A549 (cell line): ENCODE measurements at regions of chr7 and their contacts with region 1.

Region 1: GRCh38 chr7:128425850-128426249 is 16.1 kb upstream of the IMPDH1 start:
- DNase-seq: peak; percentile 67 to 89
- ATAC-seq: peak; percentile 62 to 71; a peak in 5 of 6 replicates
- H3K4me3 ChIP-seq: no peak overlapping the region
- H3K27ac ChIP-seq: no peak overlapping the region
- H3K4me1 ChIP-seq: peaks cover 20% of the 10 kb centered on the region
- CTCF ChIP-seq: peak; percentile 88
- EP300 ChIP-seq: no peak
- POLR2A ChIP-seq: no peak
- RAD21 ChIP-seq: peak; percentile 81 to 91

Region 2: DNA sequence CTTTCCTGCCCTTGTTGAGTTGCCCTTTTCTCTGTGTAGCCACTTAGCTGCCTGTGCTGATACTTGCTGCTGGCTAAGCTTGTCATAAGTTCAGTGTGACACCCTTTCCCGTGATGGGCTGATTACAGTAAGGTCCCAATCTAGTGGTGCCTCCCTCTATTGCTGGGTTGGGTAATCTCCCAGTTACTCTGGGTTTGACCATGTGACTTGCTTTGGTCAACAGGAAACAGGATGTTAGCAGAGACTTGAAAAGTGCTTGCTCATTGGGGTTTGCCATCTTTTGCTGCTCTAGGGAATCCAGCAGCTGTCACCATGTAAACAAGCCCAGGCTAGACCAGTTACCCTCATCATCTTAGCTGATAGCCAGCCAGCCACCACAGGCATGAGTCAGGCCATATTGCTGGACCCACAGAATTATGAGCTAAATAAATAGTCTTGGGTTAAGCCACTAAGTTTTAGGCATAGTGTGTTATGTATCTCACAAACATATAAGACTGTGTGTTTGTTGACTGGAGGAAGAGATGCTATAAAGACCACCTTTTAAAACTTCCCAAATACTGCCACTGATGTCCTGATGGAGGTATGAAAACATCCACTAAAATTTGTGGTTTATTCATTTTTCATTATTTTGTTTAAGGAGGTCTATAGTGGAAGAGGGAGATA is 188.8 kb before region 1 on chr7:
- CTCF ChIA-PET with region 1: no interaction called
- POLR2A ChIA-PET with region 1: no interaction called
- DNase-seq: peak; percentile 32 to 87
- ATAC-seq: peak; percentile 71 to 82
- H3K4me3 ChIP-seq: no peak overlapping the region
- H3K27ac ChIP-seq: peak overlapping the region in 1 of 2 experiments; percentile 39; a peak in 3 of 6 replicates
- H3K4me1 ChIP-seq: peaks cover 10% of the 10 kb centered on the region; the same call in 2 of the 3 replicates
- CTCF ChIP-seq: no peak
- EP300 ChIP-seq: no peak
- POLR2A ChIP-seq: no peak
- RAD21 ChIP-seq: no peak

Region 3: GRCh38 chr7:128322040-128322643 is 103.7 kb before region 1 on chr7:
- CTCF ChIA-PET with region 1: no interaction called
- POLR2A ChIA-PET with region 1: no interaction called
- DNase-seq: peak in 1 of 2 experiments; percentile 54
- ATAC-seq: peak; percentile 83 to 88; a peak in 5 of 6 replicates
- H3K4me3 ChIP-seq: no peak overlapping the region
- H3K27ac ChIP-seq: no peak overlapping the region
- H3K4me1 ChIP-seq: no peaks in the 10 kb centered on the region
- CTCF ChIP-seq: peak; percentile 44
- EP300 ChIP-seq: no peak
- POLR2A ChIP-seq: no peak
- RAD21 ChIP-seq: peak; percentile 33 to 47; a peak in 3 of 5 replicates

Region 4: DNA sequence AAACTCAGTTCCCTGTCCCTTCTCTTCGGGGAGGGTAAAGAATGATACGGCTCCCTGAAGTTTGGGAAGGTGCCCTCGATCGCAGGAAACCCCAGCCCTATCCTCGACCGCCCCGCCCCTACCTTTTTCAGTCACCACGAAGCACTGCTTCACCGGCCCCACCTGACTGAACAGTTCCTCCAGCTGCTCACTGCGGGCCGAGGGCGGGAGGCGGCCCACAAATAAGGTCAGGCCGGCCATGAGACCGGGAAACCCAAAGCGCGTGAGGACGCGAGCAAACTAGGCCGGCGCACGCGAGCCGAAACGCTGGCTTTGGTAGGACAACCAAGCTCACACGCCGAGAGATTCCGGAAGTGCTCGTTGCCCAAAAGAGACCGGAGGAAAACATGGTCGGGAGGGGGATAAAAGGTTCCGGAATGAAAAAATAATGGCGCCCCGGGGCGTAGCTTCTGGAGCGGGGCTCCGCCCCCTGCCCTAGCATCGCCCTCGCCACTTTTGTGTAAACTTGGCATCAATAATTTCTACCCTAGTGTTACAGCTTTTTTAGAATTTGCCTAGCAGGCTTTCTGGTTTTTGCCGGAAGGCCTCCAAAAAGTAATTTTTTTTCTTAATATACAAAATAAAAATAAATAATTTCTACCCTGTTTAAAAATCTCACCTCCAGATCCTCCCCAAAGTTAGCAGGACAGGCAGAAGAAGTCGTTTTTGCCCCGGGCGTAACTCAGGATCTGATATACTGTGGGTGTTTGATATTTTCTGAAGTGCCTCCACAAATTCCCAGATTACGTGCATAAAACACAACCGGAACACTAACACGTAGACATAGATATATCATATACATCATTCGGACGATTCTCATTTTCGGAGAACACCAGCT is 82.1 kb before region 1 on chr7 and contains the start of gene RBM28:
- CTCF ChIA-PET with region 1: interaction called, 162 read pairs
- POLR2A ChIA-PET with region 1: no interaction called
- DNase-seq: peak; percentile 92 to 98
- ATAC-seq: peak; percentile 87 to 95
- H3K4me3 ChIP-seq: peak within 1 kb of the TSS; percentile 94
- H3K27ac ChIP-seq: peak within 1 kb of the TSS; percentile 89 to 94
- H3K4me1 ChIP-seq: peaks cover 20% of the 10 kb centered on the region; the same call in 2 of the 3 replicates
- CTCF ChIP-seq: no peak
- EP300 ChIP-seq: no peak
- POLR2A ChIP-seq: peak; percentile 96
- RAD21 ChIP-seq: no peak
- polyA plus RNA-seq, gene RBM28: 51.9 and 77.3 TPM in 2 replicates

Region 5: DNA sequence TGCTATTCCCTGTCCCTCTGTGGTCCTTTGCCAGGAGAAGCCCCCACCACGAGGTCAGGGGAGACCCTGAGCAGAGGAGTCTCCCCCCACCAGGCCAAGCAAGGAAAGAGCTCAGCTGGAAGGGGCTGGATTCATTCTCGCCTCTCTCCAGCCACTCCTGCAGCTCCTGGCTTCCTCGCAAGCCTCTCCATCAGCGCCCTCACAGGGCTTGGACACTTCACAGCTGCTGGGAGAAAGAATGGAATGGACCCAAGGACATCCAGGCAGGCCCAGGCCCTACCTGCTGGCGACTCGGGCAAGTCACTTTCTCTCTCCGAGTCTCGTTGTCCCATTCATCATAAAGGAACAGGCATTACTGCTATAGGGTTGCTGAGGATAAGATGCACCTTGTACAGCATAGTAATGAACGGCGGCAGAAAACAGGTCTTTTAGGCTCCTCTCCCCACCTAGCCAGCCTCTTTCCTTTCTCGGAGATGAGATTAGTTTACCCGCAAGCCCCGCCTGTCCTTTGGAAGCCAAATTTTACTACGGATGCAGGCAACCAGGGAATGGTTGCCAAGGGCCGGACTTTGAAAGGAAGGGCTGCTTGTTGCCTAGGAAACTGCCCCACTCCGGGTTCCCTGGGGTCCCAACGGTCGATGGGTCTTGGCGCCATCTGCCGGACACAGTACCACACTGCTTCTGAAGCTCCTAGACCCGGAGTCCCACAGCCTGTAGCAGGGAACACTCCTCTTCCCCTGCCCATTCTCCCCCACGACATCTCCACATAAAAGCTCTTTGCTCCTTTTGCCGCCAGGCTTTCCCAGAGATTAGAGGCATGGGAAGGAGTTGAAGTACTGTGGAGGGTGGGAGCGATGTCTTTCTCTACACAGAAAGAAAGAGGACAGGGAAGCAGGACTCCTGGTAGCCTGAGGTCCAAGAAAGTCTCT is 38.4 kb before region 1 on chr7:
- CTCF ChIA-PET with region 1: interaction called, 89 read pairs
- POLR2A ChIA-PET with region 1: no interaction called
- DNase-seq: peak; percentile 66 to 97
- ATAC-seq: peak; percentile 58 to 91
- H3K4me3 ChIP-seq: no peak overlapping the region
- H3K27ac ChIP-seq: no peak overlapping the region
- H3K4me1 ChIP-seq: no peaks in the 10 kb centered on the region
- CTCF ChIP-seq: peak; percentile 81
- EP300 ChIP-seq: no peak
- POLR2A ChIP-seq: no peak
- RAD21 ChIP-seq: peak; percentile 68 to 73

Region 6: GRCh38 chr7:128437426-128438332 is 11.8 kb after region 1 on chr7:
- CTCF ChIA-PET with region 1: interaction called, 695 read pairs
- POLR2A ChIA-PET with region 1: no interaction called
- DNase-seq: no peak
- ATAC-seq: no peak
- H3K4me3 ChIP-seq: no peak overlapping the region
- H3K27ac ChIP-seq: peak overlapping the region; percentile 43 to 87; a peak in 5 of 6 replicates
- H3K4me1 ChIP-seq: peaks cover 49% of the 10 kb centered on the region
- CTCF ChIP-seq: no peak
- EP300 ChIP-seq: no peak
- POLR2A ChIP-seq: no peak
- RAD21 ChIP-seq: no peak

Region 7: GRCh38 chr7:128455551-128456254 is 29.9 kb after region 1 on chr7 and contains the start of gene HILPDA:
- CTCF ChIA-PET with region 1: interaction called, 345 read pairs
- POLR2A ChIA-PET with region 1: interaction called, 5 read pairs
- DNase-seq: peak; percentile 91 to 94
- ATAC-seq: peak; percentile 94 to 95
- H3K4me3 ChIP-seq: peak within 1 kb of the TSS; percentile 78
- H3K27ac ChIP-seq: peak within 1 kb of the TSS; percentile 86 to 94
- H3K4me1 ChIP-seq: peaks cover 49% of the 10 kb centered on the region
- CTCF ChIP-seq: no peak
- EP300 ChIP-seq: peak in 1 of 2 experiments; percentile 24; a peak in 1 of 5 replicates
- POLR2A ChIP-seq: peak; percentile 87
- RAD21 ChIP-seq: no peak
- polyA plus RNA-seq, gene HILPDA: 94.6 and 179 TPM in 2 replicates

Region 8: GRCh38 chr7:128883622-128884501 is 458.0 kb after region 1 on chr7:
- CTCF ChIA-PET with region 1: interaction called, 39 read pairs
- POLR2A ChIA-PET with region 1: no interaction called
- DNase-seq: peak; percentile 74 to 93
- ATAC-seq: peak; percentile 41 to 80
- H3K4me3 ChIP-seq: no peak overlapping the region
- H3K27ac ChIP-seq: no peak overlapping the region
- H3K4me1 ChIP-seq: no peaks in the 10 kb centered on the region
- CTCF ChIP-seq: peak; percentile 91
- EP300 ChIP-seq: no peak
- POLR2A ChIP-seq: no peak
- RAD21 ChIP-seq: peak; percentile 76 to 78